ENCODE measurements at regions of chr2 and their contacts with region 1.

Region 1: GRCh38 chr2:183229386-183229785 is 105.1 kb downstream of the NUP35 start:
- DNase-seq: no peak
- ATAC-seq: no peak
- H3K4me3 ChIP-seq: no peak overlapping the region
- H3K27ac ChIP-seq: no peak overlapping the region
- H3K4me1 ChIP-seq: no peaks in the 10 kb centered on the region
- CTCF ChIP-seq: no peak
- EP300 ChIP-seq: no peak
- POLR2A ChIP-seq: no peak
- RAD21 ChIP-seq: no peak

Region 2: GRCh38 chr2:183134016-183134415 is 95.4 kb before region 1 on chr2:
- CTCF ChIA-PET with region 1: no interaction called
- POLR2A ChIA-PET with region 1: interaction called, 11 read pairs
- DNase-seq: no peak
- ATAC-seq: no peak
- H3K4me3 ChIP-seq: no peak overlapping the region
- H3K27ac ChIP-seq: no peak overlapping the region
- H3K4me1 ChIP-seq: no peaks in the 10 kb centered on the region
- CTCF ChIP-seq: no peak
- EP300 ChIP-seq: no peak
- POLR2A ChIP-seq: no peak
- RAD21 ChIP-seq: no peak

Region 3: GRCh38 chr2:183292028-183292427 is 62.6 kb after region 1 on chr2:
- CTCF ChIA-PET with region 1: no interaction called
- POLR2A ChIA-PET with region 1: no interaction called
- DNase-seq: no peak
- ATAC-seq: no peak
- H3K4me3 ChIP-seq: no peak overlapping the region
- H3K27ac ChIP-seq: no peak overlapping the region
- H3K4me1 ChIP-seq: no peaks in the 10 kb centered on the region
- CTCF ChIP-seq: no peak
- EP300 ChIP-seq: no peak
- POLR2A ChIP-seq: no peak
- RAD21 ChIP-seq: no peak